Activated naive CD4-positive, alpha-beta T cell treated with anti-CD3 and anti-CD28 coated beads for 36 hours (primary cell): ENCODE measurements at regions of chr6 and their contacts with region 1.

Region 1: DNA sequence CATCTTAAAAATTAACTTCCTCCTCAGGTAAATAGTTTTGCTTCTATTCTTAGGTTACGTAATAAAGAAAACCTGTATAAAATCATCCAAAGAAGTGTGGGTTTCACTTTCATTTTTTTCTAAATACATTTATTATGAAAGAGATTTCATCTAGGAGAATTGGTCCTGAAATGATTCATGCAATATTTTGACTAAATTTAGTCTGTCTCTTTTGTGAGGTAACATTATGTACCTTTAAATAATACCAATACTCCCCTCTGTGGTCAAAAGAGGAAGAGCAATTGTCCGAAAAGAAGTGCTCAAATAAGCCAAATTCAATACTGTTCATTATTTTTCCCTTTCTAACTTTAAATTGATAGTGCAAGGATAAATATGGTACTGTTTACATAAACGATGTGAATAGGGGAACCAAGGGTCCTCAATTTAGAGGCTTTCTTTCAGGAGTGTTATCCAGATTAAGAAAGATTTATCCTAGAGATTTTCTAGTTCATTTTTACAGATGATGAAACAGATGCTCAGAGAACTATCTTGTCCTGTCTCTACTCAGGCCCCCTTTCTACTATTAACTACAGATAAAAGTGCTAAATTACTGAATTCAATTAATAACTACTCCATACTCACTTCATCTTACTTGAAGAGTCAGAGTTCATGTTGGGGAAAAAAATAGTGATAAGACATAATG is 26.2 kb downstream of the CYP39A1 start:
- DNase-seq: no peak
- H3K4me3 Mint-ChIP-seq: no peak overlapping the region
- H3K27ac Mint-ChIP-seq: no peak overlapping the region
- H3K4me1 Mint-ChIP-seq: peaks cover 10% of the 10 kb centered on the region
- H3K27me3 Mint-ChIP-seq: peaks cover 3% of the 10 kb centered on the region

Region 2: DNA sequence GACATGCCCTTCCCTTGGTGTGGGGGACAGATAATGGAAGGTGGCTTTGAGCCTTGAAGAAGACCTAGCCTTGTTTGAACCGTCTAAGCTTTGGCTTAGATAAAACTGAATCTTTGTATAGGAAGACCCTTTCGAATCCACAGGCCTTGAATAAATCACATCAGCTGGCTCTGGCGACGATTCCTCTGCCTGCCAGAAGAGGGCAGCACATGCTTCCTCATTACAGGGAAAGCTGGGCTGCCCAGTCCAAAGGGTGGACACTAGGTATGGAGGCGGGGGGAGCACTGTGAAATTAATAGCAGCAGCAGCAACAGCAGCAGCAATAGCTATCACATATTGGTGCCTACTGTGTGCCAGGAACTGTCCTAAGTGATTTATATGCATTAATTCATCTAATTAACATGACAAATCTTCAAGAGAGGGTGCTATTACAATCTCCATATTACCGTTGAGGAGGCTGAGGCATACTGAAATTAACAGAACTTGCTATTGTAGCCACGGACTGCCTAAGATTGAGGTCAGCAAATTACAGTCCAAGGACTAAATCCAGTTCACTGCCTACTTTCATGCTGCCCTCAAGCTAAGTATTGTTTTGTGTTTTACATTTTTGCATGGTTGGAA is 695.8 kb before region 1 on chr6:
- CTCF ChIA-PET with region 1: interaction called, 3 read pairs
- intact Hi-C with region 1: loop called (anchors 1 kb)
- DNase-seq: peak; percentile 72
- H3K4me3 Mint-ChIP-seq: no peak overlapping the region
- H3K27ac Mint-ChIP-seq: no peak overlapping the region
- H3K4me1 Mint-ChIP-seq: no peaks in the 10 kb centered on the region
- H3K27me3 Mint-ChIP-seq: peaks cover 4% of the 10 kb centered on the region

Region 3: GRCh38 chr6:46042355-46042999 is 583.9 kb before region 1 on chr6:
- CTCF ChIA-PET with region 1: no interaction called
- intact Hi-C with region 1: loop called (anchors 5 kb)
- DNase-seq: peak; percentile 20
- H3K4me3 Mint-ChIP-seq: no peak overlapping the region
- H3K27ac Mint-ChIP-seq: no peak overlapping the region
- H3K4me1 Mint-ChIP-seq: peaks cover 4% of the 10 kb centered on the region
- H3K27me3 Mint-ChIP-seq: no peaks in the 10 kb centered on the region

Region 4: DNA sequence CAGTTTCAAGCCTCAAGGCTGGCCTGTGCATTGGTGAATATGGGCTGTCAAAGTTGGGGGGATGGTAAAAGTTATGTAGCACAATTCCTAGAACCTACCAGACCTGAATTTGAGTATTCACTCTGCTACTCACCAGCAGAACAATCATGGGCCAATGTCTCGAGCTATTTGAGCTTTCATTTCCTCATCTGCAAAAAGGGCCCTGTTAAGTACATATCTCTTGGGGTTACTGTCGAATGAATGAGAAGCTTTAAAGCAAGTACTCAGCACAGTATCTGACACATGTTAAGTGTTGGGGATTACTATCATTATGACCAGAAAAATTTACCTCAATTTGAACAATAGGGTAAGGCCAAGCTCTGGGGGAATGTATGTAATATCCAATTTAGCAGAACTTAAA is 510.1 kb before region 1 on chr6:
- CTCF ChIA-PET with region 1: no interaction called
- intact Hi-C with region 1: no loop called
- DNase-seq: no peak
- H3K4me3 Mint-ChIP-seq: no peak overlapping the region
- H3K27ac Mint-ChIP-seq: no peak overlapping the region
- H3K4me1 Mint-ChIP-seq: peaks cover 10% of the 10 kb centered on the region
- H3K27me3 Mint-ChIP-seq: no peaks in the 10 kb centered on the region

Region 5: DNA sequence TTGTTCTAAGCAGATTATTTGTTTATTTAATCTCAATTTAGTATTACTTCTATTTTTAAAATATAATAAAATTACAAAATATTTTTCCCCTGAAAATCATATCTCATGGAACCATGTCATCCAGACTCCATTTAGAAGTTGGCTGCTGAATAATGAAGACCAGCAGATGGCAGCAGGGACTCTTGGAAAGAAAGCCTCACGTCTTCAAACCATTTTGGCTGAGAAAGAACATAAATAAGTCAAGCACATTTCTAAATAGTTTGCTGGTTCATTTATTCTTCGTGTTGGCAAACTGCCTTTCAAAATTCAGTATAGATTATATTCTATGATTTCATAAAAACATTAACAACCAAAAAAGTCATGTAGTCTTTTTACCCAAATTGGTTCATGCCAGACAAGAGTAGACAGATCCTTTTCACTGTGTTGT is 206.8 kb before region 1 on chr6:
- CTCF ChIA-PET with region 1: interaction called, 4 read pairs
- intact Hi-C with region 1: loop called (anchors 1 kb)
- DNase-seq: peak; percentile 71
- H3K4me3 Mint-ChIP-seq: no peak overlapping the region
- H3K27ac Mint-ChIP-seq: no peak overlapping the region
- H3K4me1 Mint-ChIP-seq: no peaks in the 10 kb centered on the region
- H3K27me3 Mint-ChIP-seq: peaks cover 12% of the 10 kb centered on the region

Region 6: GRCh38 chr6:46642928-46643751 is 16.8 kb after region 1 on chr6:
- CTCF ChIA-PET with region 1: no interaction called
- intact Hi-C with region 1: loop called (anchors 1 kb)
- DNase-seq: peak; percentile 10
- H3K4me3 Mint-ChIP-seq: no peak overlapping the region
- H3K27ac Mint-ChIP-seq: peak overlapping the region; percentile 24
- H3K4me1 Mint-ChIP-seq: peaks cover 11% of the 10 kb centered on the region
- H3K27me3 Mint-ChIP-seq: peaks cover 14% of the 10 kb centered on the region